OCI-LY7 (cell line): ENCODE measurements at regions of chr20 and their contacts with region 1.

Region 1: DNA sequence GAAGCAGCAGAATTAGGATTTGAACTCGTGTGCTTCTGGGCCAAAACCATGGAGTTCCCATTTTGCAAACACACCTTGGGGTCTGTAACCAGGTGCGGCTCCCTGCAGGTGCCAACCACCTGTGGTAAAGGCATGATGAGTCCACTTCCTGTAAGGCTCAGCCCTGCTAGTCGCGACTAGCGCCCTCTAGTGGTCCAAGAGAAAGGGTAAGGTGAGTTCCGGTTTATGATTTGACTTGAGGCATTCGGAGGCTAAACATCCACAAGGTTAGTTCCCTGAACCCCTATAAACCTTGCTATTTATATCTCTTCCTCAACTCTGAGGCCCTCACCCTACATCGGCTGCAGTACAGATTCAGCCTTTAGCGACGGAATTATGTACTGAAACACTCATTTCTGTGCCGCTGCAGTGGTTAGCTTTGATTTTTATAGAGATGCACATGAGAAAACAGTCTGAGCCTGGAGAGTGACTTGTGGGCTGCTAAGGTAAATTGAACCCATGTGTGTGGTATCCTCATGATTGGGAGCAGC is 173.4 kb downstream of the PLCB1 start:
- DNase-seq: peak; percentile 86
- H3K4me3 ChIP-seq: no peak overlapping the region
- H3K27ac ChIP-seq: no peak overlapping the region
- H3K4me1 ChIP-seq: peaks cover 7% of the 10 kb centered on the region
- CTCF ChIP-seq: peak; percentile 93

Region 2: GRCh38 chr20:7935027-7935551 is 370.4 kb before region 1 on chr20:
- CTCF ChIA-PET with region 1: no interaction called
- POLR2A ChIA-PET with region 1: no interaction called
- intact Hi-C with region 1: loop called (anchors 10 kb)
- DNase-seq: peak; percentile 66
- H3K4me3 ChIP-seq: peak overlapping the region; percentile 26
- H3K27ac ChIP-seq: peak overlapping the region; percentile 24
- H3K4me1 ChIP-seq: peaks cover 31% of the 10 kb centered on the region
- CTCF ChIP-seq: no peak

Region 3: DNA sequence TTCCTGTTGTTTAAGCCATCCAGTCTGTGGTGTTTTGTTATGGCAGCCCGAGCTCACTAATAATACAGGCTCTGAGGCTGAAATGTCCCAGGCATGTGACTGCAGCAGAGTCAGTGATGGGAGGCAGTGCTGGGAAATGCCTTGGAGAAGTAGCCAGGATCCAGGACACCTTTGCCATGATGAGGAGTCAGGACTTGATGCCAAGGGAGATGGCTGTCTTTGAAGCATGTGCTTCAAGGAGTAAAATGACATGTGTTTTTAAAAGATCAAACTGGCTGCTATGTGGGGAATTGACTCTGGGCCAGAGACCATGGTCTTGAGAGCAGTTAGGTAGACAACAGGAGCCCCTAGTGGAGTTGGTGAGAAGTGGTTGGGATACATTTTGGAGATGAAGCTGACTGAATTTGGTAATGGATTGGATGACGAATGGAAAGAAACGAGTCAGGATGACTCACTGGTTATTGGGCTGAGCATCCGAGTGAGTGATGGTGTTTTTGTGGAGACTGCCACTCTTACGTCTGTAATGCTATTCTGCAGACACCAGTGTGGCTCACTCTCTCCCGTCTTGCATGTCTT is 148.7 kb after region 1 on chr20:
- CTCF ChIA-PET with region 1: no interaction called
- POLR2A ChIA-PET with region 1: no interaction called
- intact Hi-C with region 1: loop called (anchors 5 kb)
- DNase-seq: peak; percentile 53
- H3K4me3 ChIP-seq: no peak overlapping the region
- H3K27ac ChIP-seq: no peak overlapping the region
- H3K4me1 ChIP-seq: peaks cover 6% of the 10 kb centered on the region
- CTCF ChIP-seq: peak; percentile 71

Region 4: GRCh38 chr20:8527998-8528723 is 222.6 kb after region 1 on chr20:
- CTCF ChIA-PET with region 1: no interaction called
- POLR2A ChIA-PET with region 1: no interaction called
- intact Hi-C with region 1: no loop called
- DNase-seq: peak; percentile 59
- H3K4me3 ChIP-seq: no peak overlapping the region
- H3K27ac ChIP-seq: peak overlapping the region; percentile 30
- H3K4me1 ChIP-seq: peaks cover 75% of the 10 kb centered on the region
- CTCF ChIP-seq: no peak